Activated naive CD4-positive, alpha-beta T cell treated with anti-CD3 and anti-CD28 coated beads for 36 hours (primary cell): ENCODE measurements at regions of chr10 and their contacts with region 1.

Region 1: DNA sequence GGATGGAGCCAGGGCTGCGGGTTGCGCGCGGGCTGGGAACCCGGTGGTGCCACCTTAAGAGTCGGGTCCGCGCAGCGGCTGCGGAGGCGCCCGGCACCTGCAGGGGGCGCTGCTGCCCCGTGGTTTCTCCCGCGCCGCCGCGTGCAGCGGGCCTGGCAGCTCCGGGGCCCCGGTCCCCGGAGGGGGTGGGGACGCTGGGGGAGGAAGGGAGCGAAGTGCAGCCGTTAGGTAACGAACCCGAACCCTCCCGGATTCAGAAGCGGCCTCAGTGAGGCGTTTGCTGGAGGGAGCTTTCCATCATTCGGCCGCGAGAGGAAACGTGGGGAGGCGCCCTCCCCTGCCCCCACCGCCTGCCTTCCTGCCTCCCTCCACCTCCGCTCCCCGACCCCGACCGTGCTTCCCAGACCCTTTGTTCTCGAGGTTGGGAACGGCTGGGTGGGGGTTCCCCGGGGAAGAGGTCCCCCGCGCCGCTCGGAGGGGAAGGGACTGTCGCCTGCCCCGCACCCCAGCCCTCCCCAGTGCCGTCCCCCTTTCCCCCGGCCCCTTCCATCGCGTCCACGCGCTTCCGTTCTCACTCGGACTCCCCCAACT is 29.6 kb downstream of the SKIDA1 start:
- DNase-seq: peak; percentile 85
- H3K4me3 Mint-ChIP-seq: peak overlapping the region; percentile 77
- H3K27ac Mint-ChIP-seq: no peak overlapping the region
- H3K4me1 Mint-ChIP-seq: peaks cover 14% of the 10 kb centered on the region
- H3K27me3 Mint-ChIP-seq: peaks cover 54% of the 10 kb centered on the region

Region 2: DNA sequence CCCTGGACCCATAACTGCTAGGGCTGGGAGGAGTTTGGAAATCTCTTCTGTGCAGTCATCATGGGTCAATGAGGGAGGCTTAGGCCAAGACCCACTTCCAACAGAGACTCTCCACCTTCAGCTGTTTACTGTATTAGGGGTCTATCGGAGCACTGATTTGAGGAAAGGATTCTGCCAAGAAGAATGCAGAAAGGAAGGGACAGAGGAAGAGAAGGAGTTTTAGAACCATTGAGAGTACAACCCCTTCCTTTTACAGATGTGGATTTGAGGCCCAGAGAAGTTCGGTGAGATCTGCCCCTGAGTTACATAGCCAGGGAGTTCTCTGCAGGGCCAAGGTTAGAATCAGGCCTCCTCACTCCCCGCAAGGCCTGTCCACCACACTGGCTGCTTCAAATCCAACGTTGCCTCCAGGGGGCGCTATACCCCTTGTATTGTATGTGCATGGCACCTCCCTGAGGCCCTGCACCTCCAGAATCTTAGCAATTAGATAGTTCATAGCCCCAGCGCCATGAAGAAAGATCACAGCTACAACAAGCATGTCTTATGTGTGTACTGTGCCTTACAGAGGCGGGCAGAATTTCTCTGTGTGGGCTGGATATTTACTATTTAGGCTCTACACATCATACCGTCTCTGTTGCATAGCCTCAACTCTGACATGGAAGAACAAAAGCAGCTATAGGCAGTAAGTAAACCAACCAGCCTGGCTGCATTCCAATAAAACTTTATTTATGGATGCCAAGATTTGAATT is 217.2 kb before region 1 on chr10:
- CTCF ChIA-PET with region 1: interaction called, 6 read pairs
- intact Hi-C with region 1: loop called (anchors 5 kb)
- DNase-seq: peak; percentile 92
- H3K4me3 Mint-ChIP-seq: no peak overlapping the region
- H3K27ac Mint-ChIP-seq: no peak overlapping the region
- H3K4me1 Mint-ChIP-seq: no peaks in the 10 kb centered on the region
- H3K27me3 Mint-ChIP-seq: no peaks in the 10 kb centered on the region

Region 3: DNA sequence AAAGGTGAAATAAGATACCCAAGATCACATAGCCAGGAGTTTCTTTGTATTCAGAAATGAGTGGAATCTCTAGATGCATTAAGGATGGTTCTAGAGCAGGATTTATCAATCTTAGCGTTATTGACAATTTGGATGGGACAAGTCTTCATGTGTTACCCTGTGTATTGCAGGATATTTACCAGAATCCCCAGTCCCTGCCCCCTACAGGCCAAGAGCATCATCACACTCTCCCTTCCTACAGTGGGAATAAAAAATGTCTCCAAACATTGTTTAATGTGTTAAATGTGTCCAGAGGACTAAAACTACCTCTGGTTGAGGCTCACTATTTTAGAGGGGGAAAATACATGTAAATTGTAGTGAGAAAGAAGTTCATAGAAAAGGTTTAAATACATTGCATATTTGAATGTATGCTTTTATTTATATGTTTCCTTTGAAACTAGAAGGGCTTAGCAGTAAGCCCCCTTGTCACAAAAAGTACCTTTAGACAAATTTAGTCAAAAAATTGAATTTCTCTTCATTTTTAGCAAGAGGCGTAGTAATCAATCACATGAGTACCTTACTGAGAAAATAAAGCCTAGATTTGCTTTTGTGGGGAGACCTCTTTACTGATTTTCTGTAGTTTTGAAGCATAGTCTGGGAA is 179.4 kb after region 1 on chr10:
- CTCF ChIA-PET with region 1: interaction called, 6 read pairs
- intact Hi-C with region 1: loop called (anchors 5 kb)
- DNase-seq: peak; percentile 51
- H3K4me3 Mint-ChIP-seq: no peak overlapping the region
- H3K27ac Mint-ChIP-seq: no peak overlapping the region
- H3K4me1 Mint-ChIP-seq: peaks cover 3% of the 10 kb centered on the region
- H3K27me3 Mint-ChIP-seq: no peaks in the 10 kb centered on the region

Region 4: GRCh38 chr10:22228943-22229801 is 733.3 kb after region 1 on chr10:
- CTCF ChIA-PET with region 1: no interaction called
- intact Hi-C with region 1: loop called (anchors 1 kb)
- DNase-seq: peak; percentile 89
- H3K4me3 Mint-ChIP-seq: peak overlapping the region; percentile 82
- H3K27ac Mint-ChIP-seq: peak overlapping the region; percentile 96
- H3K4me1 Mint-ChIP-seq: peaks cover 17% of the 10 kb centered on the region
- H3K27me3 Mint-ChIP-seq: peaks cover 5% of the 10 kb centered on the region

Region 5: DNA sequence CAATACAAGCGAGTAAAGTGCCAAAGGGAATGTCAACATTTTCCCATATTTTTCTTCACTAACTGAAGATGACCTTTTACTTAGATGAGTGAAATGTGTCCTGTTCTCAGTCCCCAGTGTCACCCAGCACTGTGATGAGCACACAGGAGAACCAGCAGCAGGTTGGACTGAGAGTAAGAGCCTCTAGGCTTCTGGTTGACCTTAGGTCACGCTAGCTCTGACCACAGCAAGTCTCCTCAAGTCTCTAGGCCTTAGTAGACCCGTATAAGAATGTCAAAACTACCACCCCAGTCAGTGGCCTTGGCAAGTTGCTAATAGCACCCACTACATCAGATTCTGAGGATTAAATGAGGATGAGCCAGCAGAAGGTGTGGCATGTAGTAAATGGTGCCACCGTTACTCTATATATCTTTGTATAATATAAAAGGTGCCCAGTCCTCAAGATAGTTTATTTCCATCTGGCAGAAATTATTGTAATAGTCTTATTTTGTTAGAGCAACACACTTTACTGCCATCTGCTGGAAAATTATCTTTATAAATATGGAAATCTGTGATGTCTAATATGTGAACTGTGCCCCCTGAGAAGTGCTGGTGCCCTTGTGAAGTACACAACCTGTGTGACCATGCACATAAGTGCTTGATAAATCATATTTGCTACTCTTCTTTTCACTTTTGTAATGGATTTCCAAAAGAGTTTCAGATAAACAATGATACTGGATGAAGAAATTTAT is 925.1 kb after region 1 on chr10:
- CTCF ChIA-PET with region 1: no interaction called
- intact Hi-C with region 1: loop called (anchors 5 kb)
- DNase-seq: no peak
- H3K4me3 Mint-ChIP-seq: no peak overlapping the region
- H3K27ac Mint-ChIP-seq: no peak overlapping the region
- H3K4me1 Mint-ChIP-seq: no peaks in the 10 kb centered on the region
- H3K27me3 Mint-ChIP-seq: no peaks in the 10 kb centered on the region